ENCODE measurements at regions of chr2 and their contacts with region 1.

Region 1: GRCh38 chr2:161243905-161244304 is 64.3 kb upstream of the PSMD14 start:
- DNase-seq: no peak
- H3K4me3 Mint-ChIP-seq: peak overlapping the region; percentile 87
- H3K27ac Mint-ChIP-seq: peak overlapping the region; percentile 96
- H3K4me1 Mint-ChIP-seq: peaks cover 65% of the 10 kb centered on the region
- H3K27me3 Mint-ChIP-seq: no peaks in the 10 kb centered on the region

Region 2: GRCh38 chr2:161160226-161161069 is 83.5 kb before region 1 on chr2 and contains the start of gene TANK:
- intact Hi-C with region 1: loop called (anchors 1 kb)
- DNase-seq: peak; percentile 88
- H3K4me3 Mint-ChIP-seq: peak within 1 kb of the TSS; percentile 97
- H3K27ac Mint-ChIP-seq: peak within 1 kb of the TSS; percentile 99
- H3K4me1 Mint-ChIP-seq: peaks cover 81% of the 10 kb centered on the region
- H3K27me3 Mint-ChIP-seq: no peaks in the 10 kb centered on the region
- total RNA-seq, gene TANK: 136 and 141 TPM in 2 replicates

Region 3: GRCh38 chr2:161223139-161223732 is 20.7 kb before region 1 on chr2:
- intact Hi-C with region 1: loop called (anchors 2 kb)
- DNase-seq: no peak
- H3K4me3 Mint-ChIP-seq: no peak overlapping the region
- H3K27ac Mint-ChIP-seq: no peak overlapping the region
- H3K4me1 Mint-ChIP-seq: peaks cover 20% of the 10 kb centered on the region
- H3K27me3 Mint-ChIP-seq: no peaks in the 10 kb centered on the region

Measured in activated T-helper 1 cell treated with anti-CD3 and anti-CD28 coated beads, Interleukin-12 subunit alpha, Interleukin-12 subunit beta, Interleukin-2, Interleukin-4 antibody, amounts not matched to agents 30 ng/mL and 10 ng/mL and 1 ng/mL, durations not matched to agents 14 hours and 24 hours and 36 hours (primary cell).